ENCODE measurements at regions of chr4 and their contacts with region 1.

Region 1: GRCh38 chr4:1043658-1044468 is 32.4 kb downstream of the FGFRL1 start:
- DNase-seq: peak; percentile 90 to 99 (median 95)
- H3K4me3 ChIP-seq: peak overlapping the region in 1 of 3 experiments; percentile 32
- H3K4me3 Mint-ChIP-seq: peak overlapping the region in 1 of 2 donors; percentile 72
- H3K27ac ChIP-seq: peak overlapping the region in 1 of 2 donors; percentile 73
- H3K27ac Mint-ChIP-seq: peak overlapping the region in 6 of 7 donors; percentile 48 to 95 (median 77)
- H3K4me1 ChIP-seq: peaks cover 17 to 25% of the 10 kb centered on the region in 2 donors
- H3K4me1 Mint-ChIP-seq: peaks cover 21% of the 10 kb centered on the region
- H3K27me3 ChIP-seq: peaks cover 0 to 16% of the 10 kb centered on the region in 2 donors
- H3K27me3 Mint-ChIP-seq: peaks cover 5 to 45% (median 24%) of the 10 kb centered on the region in 3 donors
- CTCF ChIP-seq: no peak

Region 2: DNA sequence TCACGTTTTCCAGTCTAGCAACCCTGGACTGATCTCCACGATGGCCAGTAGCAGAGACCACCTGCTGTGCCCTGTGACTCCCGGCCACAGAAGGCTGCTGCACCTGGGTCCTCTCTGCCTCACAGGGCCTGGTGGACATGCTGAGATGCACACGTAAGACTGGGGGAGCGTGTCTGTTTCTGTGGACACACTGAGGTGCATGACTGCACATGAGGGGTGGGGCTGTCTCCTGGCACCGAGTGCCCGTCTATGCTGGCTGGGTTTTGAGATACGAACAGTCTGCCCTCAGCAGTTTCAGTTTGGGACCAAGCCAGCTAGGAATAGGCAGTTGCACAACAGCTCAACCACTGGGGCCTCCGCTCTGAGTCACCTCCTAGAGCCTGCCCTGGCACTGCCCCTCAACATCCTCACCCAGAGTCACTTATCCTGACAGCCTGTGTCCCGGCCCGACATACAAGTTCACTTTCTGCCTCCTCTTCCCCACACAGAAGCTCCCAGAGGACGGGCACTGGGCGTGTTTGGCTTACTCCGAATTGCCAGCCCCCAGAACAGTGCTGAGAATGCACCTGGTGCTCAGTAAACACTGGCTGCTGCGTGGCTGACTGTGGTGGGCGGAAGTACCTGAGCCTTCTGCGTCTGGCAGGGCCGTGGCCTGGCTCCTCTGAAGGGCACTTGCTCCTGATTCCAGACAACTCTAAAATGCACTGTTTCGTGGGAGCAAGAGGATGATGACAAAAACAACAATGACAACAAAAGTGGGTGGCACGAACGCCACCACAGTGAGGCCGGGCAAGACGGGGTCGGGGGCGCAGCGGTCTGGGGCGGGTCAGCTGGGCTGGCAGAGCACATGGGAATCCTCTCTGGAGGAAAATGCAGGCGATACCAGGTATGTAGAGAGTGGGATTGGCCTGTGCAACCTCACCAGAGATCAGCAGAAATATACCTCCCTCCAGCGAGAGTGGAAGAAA is 38.6 kb after region 1 on chr4:
- intact Hi-C with region 1: loop called in 1 of 2 experiments (anchors 5 kb)
- DNase-seq: peak; percentile 89 to 92 (median 90)
- H3K4me3 ChIP-seq: peak overlapping the region in 1 of 3 experiments; percentile 41
- H3K4me3 Mint-ChIP-seq: peak overlapping the region; percentile 54 to 77
- H3K27ac ChIP-seq: peak overlapping the region; percentile 30 to 71
- H3K27ac Mint-ChIP-seq: peak overlapping the region; percentile 82 to 94 (median 92)
- H3K4me1 ChIP-seq: peaks cover 22 to 24% of the 10 kb centered on the region in 2 donors
- H3K4me1 Mint-ChIP-seq: peaks cover 26% of the 10 kb centered on the region
- H3K27me3 ChIP-seq: no peaks in the 10 kb centered on the region
- H3K27me3 Mint-ChIP-seq: peaks cover 10 to 14% (median 11%) of the 10 kb centered on the region in 3 donors
- CTCF ChIP-seq: no peak

Measured in CD14-positive monocyte (primary cell).